K562 (cell line): ENCODE measurements at regions of chr1 and their contacts with region 1.

Region 1: DNA sequence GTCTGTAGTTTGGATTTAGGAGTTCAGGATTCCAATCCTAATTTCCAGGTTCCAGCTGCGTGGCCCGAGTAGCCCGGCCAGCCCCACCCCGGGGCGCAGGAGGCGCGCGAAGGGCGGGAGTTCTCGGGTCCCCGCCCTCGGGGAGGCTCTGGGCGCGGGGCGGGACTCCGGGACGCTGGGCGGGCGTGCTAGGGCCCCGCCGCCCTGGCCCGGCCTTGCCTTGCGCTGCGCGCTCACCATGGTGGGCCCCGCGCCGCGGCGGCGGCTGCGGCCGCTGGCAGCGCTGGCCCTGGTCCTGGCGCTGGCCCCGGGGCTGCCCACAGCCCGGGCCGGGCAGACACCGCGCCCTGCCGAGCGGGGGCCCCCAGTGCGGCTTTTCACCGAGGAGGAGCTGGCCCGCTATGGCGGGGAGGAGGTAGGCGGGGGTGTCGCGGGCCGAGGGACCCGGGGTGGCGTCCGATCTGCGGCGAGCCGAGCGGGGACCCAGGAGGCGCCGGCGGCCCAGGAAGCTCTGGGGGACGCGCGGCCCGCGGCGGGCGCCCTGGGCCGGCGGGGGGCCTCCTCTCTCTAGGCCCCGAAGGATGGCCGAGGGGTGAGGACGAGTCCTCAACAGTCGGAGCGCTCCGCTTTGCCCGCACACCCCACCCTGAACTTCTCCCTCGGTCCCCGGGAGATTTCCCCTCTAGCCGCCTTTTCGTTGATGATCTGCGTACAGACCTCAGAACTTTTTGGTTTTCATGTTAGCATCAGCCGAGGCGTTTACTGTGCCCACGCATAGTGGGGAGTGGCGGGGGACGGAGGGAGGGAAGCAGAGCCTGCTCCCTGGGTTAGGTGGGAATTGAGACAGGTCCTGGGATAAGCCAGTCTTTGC is at the start of gene NENF:
- DNase-seq: peak; percentile 94 to 99 (median 98)
- ATAC-seq: peak; percentile 98
- H3K4me3 ChIP-seq: peak within 1 kb of the TSS; percentile 74
- H3K27ac ChIP-seq: peak within 1 kb of the TSS; percentile 66
- H3K4me1 ChIP-seq: peaks cover 34 to 54% of the 10 kb centered on the region in 2 experiments
- H3K27me3 ChIP-seq: no peaks in the 10 kb centered on the region
- CTCF ChIP-seq: no peak
- EP300 ChIP-seq: no peak
- POLR2A ChIP-seq: peak; percentile 78
- RAD21 ChIP-seq: no peak
- polyA plus RNA-seq, gene NENF: 6.1 to 11.4 TPM

Region 2: DNA sequence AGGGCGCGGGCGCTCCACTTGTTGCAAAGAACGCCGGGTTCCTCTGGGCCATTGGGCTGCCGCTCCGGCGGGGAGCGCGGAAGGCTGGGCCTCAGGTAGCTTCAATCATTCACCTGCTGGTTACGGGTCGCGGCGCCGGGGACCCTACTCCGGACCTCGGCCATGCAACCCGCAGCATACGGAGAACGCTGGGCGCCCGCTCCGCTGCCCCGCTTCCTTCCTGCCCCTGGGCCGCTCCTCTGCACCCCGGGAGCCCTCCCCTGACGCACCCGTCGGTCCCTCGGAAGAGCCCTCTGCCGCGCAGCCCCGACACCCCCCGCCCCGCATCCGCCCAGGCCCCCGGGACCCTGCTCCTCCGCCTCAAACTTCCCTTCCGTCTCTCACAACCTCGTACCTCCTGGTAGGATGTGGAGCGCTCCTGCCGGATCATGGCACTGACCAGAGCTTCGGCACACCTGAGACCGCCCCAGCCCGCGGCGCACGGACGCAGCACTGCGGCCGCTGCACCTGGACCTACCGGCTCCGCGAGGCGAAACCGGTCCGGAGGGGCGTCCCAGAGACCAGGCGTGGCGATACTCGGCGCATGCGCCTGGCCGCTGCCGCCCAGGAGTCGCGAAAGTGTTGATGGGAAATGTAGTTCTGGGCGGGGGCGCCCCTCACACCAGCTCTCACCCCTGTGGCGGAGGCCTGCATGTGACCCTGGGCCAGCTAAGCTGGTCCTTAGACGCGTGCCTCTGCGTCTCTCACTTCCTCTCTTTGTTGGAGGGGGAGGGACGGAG is 18.4 kb before region 1 on chr1 and contains the start of gene PACC1:
- CTCF ChIA-PET with region 1: interaction called, 3 read pairs
- POLR2A ChIA-PET with region 1: interaction called, 12 read pairs
- in situ Hi-C with region 1: no loop called
- intact Hi-C with region 1: loop called (anchors 2 kb)
- DNase-seq: peak; percentile 99 to 100 (median 99)
- ATAC-seq: peak; percentile 97
- H3K4me3 ChIP-seq: peak within 1 kb of the TSS; percentile 72
- H3K27ac ChIP-seq: peak within 1 kb of the TSS; percentile 63
- H3K4me1 ChIP-seq: peaks cover 23 to 35% of the 10 kb centered on the region in 2 experiments
- H3K27me3 ChIP-seq: no peaks in the 10 kb centered on the region
- CTCF ChIP-seq: peak in 2 of 3 experiments; percentile 20 to 23; a peak in 4 of 6 replicates
- EP300 ChIP-seq: no peak
- POLR2A ChIP-seq: peak; percentile 83
- RAD21 ChIP-seq: peak in 1 of 2 experiments; percentile 32; a peak in 1 of 4 replicates
- polyA plus RNA-seq, gene PACC1: 7.1 to 10.6 TPM